ENCODE measurements at regions of chr3 and their contacts with region 1.

Region 1: GRCh38 chr3:9792405-9793160 is at the starts of genes ARPC4 and TADA3:
- DNase-seq: peak; percentile 83 to 96 (median 93)
- ATAC-seq: peak; percentile 92
- H3K4me3 ChIP-seq: peak within 1 kb of the TSS; percentile 81
- H3K4me3 Mint-ChIP-seq: peak within 1 kb of the TSS; percentile 90 to 100 (median 98)
- H3K27ac ChIP-seq: peak within 1 kb of the TSS; percentile 98
- H3K27ac Mint-ChIP-seq: peak within 1 kb of the TSS; percentile 97 to 100 (median 99)
- H3K4me1 ChIP-seq: peaks cover 47% of the 10 kb centered on the region in 2 donors
- H3K4me1 Mint-ChIP-seq: peaks cover 45 to 75% (median 63%) of the 10 kb centered on the region in 7 donors
- H3K27me3 ChIP-seq: no peaks in the 10 kb centered on the region
- H3K27me3 Mint-ChIP-seq: no peaks in the 10 kb centered on the region
- total RNA-seq, gene ARPC4: 128 to 273 (median 129) TPM
- total RNA-seq, gene TADA3: 31.6 to 67.4 (median 36.8) TPM

Region 2: GRCh38 chr3:9649791-9650521 is 142.6 kb before region 1 on chr3:
- CTCF ChIA-PET with region 1: no interaction called
- POLR2A ChIA-PET with region 1: interaction called, 12 read pairs
- intact Hi-C with region 1: loop called (anchors 1 kb)
- DNase-seq: peak in 2 of 9 donors; percentile 4 to 5
- ATAC-seq: peak; percentile 15
- H3K4me3 ChIP-seq: peak overlapping the region; percentile 97
- H3K4me3 Mint-ChIP-seq: peak overlapping the region; percentile 86 to 98 (median 95)
- H3K27ac ChIP-seq: peak overlapping the region; percentile 85
- H3K27ac Mint-ChIP-seq: peak overlapping the region; percentile 91 to 98 (median 97)
- H3K4me1 ChIP-seq: peaks cover 15 to 19% of the 10 kb centered on the region in 2 donors
- H3K4me1 Mint-ChIP-seq: peaks cover 19 to 51% (median 37%) of the 10 kb centered on the region in 7 donors
- H3K27me3 ChIP-seq: no peaks in the 10 kb centered on the region
- H3K27me3 Mint-ChIP-seq: peaks cover 0 to 3% (median 0%) of the 10 kb centered on the region in 5 donors

Region 3: DNA sequence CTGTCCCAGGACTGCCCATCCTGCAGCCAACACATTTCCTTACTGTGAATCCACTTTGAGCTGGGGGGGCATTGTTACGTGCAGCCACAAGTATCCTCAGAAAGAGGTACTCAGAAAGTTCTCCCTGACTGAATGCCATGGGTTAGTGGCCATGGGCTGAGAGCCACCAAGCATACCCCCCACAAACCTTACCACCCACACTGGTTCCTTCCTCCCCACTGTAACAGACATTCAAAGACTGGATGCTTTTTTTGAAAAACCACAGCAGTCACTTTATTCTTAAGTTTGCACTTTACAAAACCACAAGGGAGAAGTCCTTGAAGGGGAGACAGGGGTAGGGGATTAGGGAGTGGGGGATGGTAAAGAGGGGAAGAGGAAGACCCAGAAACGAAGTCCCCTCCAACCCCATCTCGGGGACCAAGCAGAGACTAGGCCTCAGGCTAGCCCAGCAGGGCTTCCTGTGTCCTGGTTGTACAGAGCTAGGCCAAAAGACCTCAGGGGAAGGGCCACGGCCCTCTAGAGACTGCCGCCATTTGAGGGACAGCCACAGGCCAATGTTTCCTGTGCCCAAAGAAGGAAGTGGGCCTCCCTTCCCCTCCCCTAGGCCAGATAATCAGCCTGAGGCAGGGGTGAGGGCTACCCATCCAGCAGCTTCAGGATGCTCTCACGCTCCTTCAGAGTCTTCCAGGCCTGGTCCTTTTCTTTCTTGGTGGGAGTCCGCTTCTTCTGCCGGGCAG is 12.7 kb before region 1 on chr3:
- CTCF ChIA-PET with region 1: no interaction called
- POLR2A ChIA-PET with region 1: interaction called, 8 read pairs
- intact Hi-C with region 1: loop called in 1 of 2 experiments (anchors 1 kb)
- DNase-seq: peak in 7 of 9 donors; percentile 21 to 48 (median 38)
- ATAC-seq: peak; percentile 80
- H3K4me3 ChIP-seq: peak overlapping the region; percentile 23
- H3K4me3 Mint-ChIP-seq: peak overlapping the region; percentile 41 to 82 (median 72)
- H3K27ac ChIP-seq: peak overlapping the region; percentile 5
- H3K27ac Mint-ChIP-seq: peak overlapping the region; percentile 1 to 90 (median 72)
- H3K4me1 ChIP-seq: peaks cover 33 to 39% of the 10 kb centered on the region in 2 donors
- H3K4me1 Mint-ChIP-seq: peaks cover 43 to 63% (median 57%) of the 10 kb centered on the region in 7 donors
- H3K27me3 ChIP-seq: no peaks in the 10 kb centered on the region
- H3K27me3 Mint-ChIP-seq: no peaks in the 10 kb centered on the region

Region 4: GRCh38 chr3:9843715-9844438 is 51.3 kb after region 1 on chr3 and contains the start of gene RPUSD3:
- CTCF ChIA-PET with region 1: no interaction called
- POLR2A ChIA-PET with region 1: interaction called, 6 read pairs
- intact Hi-C with region 1: loop called (anchors 1 kb)
- DNase-seq: peak; percentile 90 to 99 (median 94)
- ATAC-seq: peak; percentile 100
- H3K4me3 ChIP-seq: peak within 1 kb of the TSS; percentile 83
- H3K4me3 Mint-ChIP-seq: peak within 1 kb of the TSS; percentile 93 to 100 (median 97)
- H3K27ac ChIP-seq: peak within 1 kb of the TSS; percentile 82
- H3K27ac Mint-ChIP-seq: peak within 1 kb of the TSS; percentile 68 to 94 (median 91)
- H3K4me1 ChIP-seq: peaks cover 4 to 5% of the 10 kb centered on the region in 2 donors
- H3K4me1 Mint-ChIP-seq: peaks cover 12 to 40% (median 23%) of the 10 kb centered on the region in 7 donors
- H3K27me3 ChIP-seq: no peaks in the 10 kb centered on the region
- H3K27me3 Mint-ChIP-seq: no peaks in the 10 kb centered on the region
- total RNA-seq, gene RPUSD3: 17.7 to 61.2 (median 58.0) TPM

Region 5: GRCh38 chr3:10026084-10026890 is 233.7 kb after region 1 on chr3 and contains the start of gene FANCD2:
- CTCF ChIA-PET with region 1: no interaction called
- POLR2A ChIA-PET with region 1: no interaction called
- intact Hi-C with region 1: loop called (anchors 1 kb)
- DNase-seq: peak; percentile 88 to 99 (median 94)
- ATAC-seq: peak; percentile 95
- H3K4me3 ChIP-seq: peak within 1 kb of the TSS; percentile 96
- H3K4me3 Mint-ChIP-seq: peak within 1 kb of the TSS; percentile 93 to 99 (median 96)
- H3K27ac ChIP-seq: peak within 1 kb of the TSS; percentile 89
- H3K27ac Mint-ChIP-seq: peak within 1 kb of the TSS; percentile 86 to 98 (median 97)
- H3K4me1 ChIP-seq: peaks cover 11 to 13% of the 10 kb centered on the region in 2 donors
- H3K4me1 Mint-ChIP-seq: peaks cover 0 to 45% (median 29%) of the 10 kb centered on the region in 7 donors
- H3K27me3 ChIP-seq: no peaks in the 10 kb centered on the region
- H3K27me3 Mint-ChIP-seq: no peaks in the 10 kb centered on the region
- total RNA-seq, gene FANCD2: 18.3 to 41.5 (median 34.1) TPM

Measured in naive thymus-derived CD4-positive, alpha-beta T cell (primary cell).